ENCODE measurements at regions of chr11 and their contacts with region 1.

Region 1: GRCh38 chr11:122655527-122656072 is at the start of gene UBASH3B:
- DNase-seq: peak; percentile 49 to 65 (median 62)
- ATAC-seq: peak; percentile 82
- H3K4me3 ChIP-seq: peak within 1 kb of the TSS; percentile 68
- H3K4me3 Mint-ChIP-seq: peak within 1 kb of the TSS; percentile 91 to 99 (median 98)
- H3K27ac ChIP-seq: peak within 1 kb of the TSS; percentile 83
- H3K27ac Mint-ChIP-seq: peak within 1 kb of the TSS; percentile 73 to 97 (median 94)
- H3K4me1 ChIP-seq: peaks cover 4 to 29% of the 10 kb centered on the region in 2 donors
- H3K4me1 Mint-ChIP-seq: peaks cover 18 to 50% (median 43%) of the 10 kb centered on the region in 7 donors
- H3K27me3 ChIP-seq: no peaks in the 10 kb centered on the region
- H3K27me3 Mint-ChIP-seq: peaks cover 0 to 60% (median 0%) of the 10 kb centered on the region in 5 donors
- total RNA-seq, gene UBASH3B: 10.4 to 49.8 (median 43.2) TPM

Region 2: GRCh38 chr11:122578168-122578825 is 77.3 kb before region 1 on chr11:
- CTCF ChIA-PET with region 1: interaction called, 3 read pairs
- POLR2A ChIA-PET with region 1: no interaction called
- intact Hi-C with region 1: loop called in 1 of 2 experiments (anchors 1 kb)
- DNase-seq: no peak
- ATAC-seq: no peak
- H3K4me3 ChIP-seq: no peak overlapping the region
- H3K4me3 Mint-ChIP-seq: no peak overlapping the region
- H3K27ac ChIP-seq: no peak overlapping the region
- H3K27ac Mint-ChIP-seq: no peak overlapping the region
- H3K4me1 ChIP-seq: no peaks in the 10 kb centered on the region
- H3K4me1 Mint-ChIP-seq: peaks cover 5 to 17% (median 11%) of the 10 kb centered on the region in 7 donors
- H3K27me3 ChIP-seq: no peaks in the 10 kb centered on the region
- H3K27me3 Mint-ChIP-seq: peaks cover 0 to 7% (median 0%) of the 10 kb centered on the region in 5 donors

Region 3: GRCh38 chr11:122598971-122599370 is 56.6 kb before region 1 on chr11:
- CTCF ChIA-PET with region 1: no interaction called
- POLR2A ChIA-PET with region 1: no interaction called
- intact Hi-C with region 1: no loop called
- DNase-seq: no peak
- ATAC-seq: no peak
- H3K4me3 ChIP-seq: no peak overlapping the region
- H3K4me3 Mint-ChIP-seq: no peak overlapping the region
- H3K27ac ChIP-seq: no peak overlapping the region
- H3K27ac Mint-ChIP-seq: no peak overlapping the region
- H3K4me1 ChIP-seq: no peaks in the 10 kb centered on the region
- H3K4me1 Mint-ChIP-seq: no peaks in the 10 kb centered on the region
- H3K27me3 ChIP-seq: no peaks in the 10 kb centered on the region
- H3K27me3 Mint-ChIP-seq: peaks cover 0 to 20% (median 16%) of the 10 kb centered on the region in 5 donors

Region 4: DNA sequence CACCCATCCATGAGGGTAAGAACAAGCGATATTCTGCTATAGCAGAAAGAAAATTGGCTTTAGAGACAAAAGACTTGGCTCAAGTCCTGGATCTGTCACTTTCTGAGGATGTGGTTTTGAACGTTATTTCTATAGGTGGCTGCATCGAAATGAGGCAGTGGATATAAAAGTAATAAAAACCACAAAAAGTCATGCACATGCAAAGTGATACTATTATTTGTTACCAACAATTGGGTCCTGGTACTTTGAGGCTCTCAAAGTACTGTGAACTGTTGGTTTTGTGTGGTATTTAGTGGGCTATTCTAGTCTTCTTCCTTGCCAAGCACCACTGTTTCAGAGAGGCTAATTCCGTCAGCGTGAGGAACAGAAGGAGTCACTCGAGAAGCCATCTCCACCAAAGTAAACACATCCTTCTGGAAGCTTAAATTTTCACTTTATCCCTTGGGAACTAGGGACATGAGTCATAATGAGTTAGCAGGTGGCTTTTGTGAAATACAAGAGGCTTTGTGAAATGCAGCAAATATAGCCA is 13.0 kb after region 1 on chr11:
- CTCF ChIA-PET with region 1: interaction called, 17 read pairs
- POLR2A ChIA-PET with region 1: interaction called, 46 read pairs
- intact Hi-C with region 1: loop called in 1 of 2 experiments (anchors 1 kb)
- DNase-seq: peak in 6 of 9 donors; percentile 22 to 68 (median 52)
- ATAC-seq: peak; percentile 47
- H3K4me3 ChIP-seq: no peak overlapping the region
- H3K4me3 Mint-ChIP-seq: peak overlapping the region; percentile 9 to 77 (median 62)
- H3K27ac ChIP-seq: peak overlapping the region; percentile 55
- H3K27ac Mint-ChIP-seq: peak overlapping the region in 8 of 9 donors; percentile 79 to 99 (median 90)
- H3K4me1 ChIP-seq: peaks cover 45 to 53% of the 10 kb centered on the region in 2 donors
- H3K4me1 Mint-ChIP-seq: peaks cover 36 to 91% (median 77%) of the 10 kb centered on the region in 7 donors
- H3K27me3 ChIP-seq: no peaks in the 10 kb centered on the region
- H3K27me3 Mint-ChIP-seq: peaks cover 0 to 9% (median 0%) of the 10 kb centered on the region in 5 donors

Region 5: DNA sequence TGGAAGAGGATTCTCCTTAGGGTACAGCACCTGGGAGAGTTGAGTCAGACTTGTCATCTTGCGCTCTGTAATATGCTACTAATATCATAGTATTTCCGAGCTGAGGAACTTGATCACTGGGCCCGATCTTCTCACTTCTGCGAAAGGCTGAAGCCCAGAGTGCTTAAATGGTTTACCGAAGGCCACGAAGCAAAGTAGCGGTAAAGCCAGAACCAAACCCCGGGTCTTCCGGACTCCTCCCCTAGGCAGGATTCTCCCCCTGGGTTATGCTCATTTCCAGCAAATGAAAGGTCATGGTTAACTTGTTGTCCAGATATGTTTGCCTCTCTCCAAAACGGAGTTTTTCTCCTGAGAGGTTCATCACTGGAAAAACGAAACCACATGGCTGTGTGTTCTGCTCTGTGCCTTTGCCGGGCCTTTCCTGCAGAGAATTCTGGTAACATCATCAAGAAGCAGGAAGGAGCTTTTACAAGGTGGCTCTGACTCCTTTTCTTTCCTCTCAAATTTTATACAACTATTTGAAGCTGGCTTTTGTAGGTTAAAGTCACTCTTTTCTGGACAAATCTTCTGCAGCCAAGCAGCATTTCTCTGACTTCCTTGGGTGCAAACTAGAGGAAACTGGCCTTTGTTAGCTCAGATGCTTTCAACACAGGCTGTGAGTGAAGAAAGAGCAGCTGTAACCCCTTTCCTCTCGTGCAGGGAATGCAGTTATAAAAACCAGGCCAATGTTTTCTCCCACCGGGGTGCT is 35.4 kb after region 1 on chr11:
- CTCF ChIA-PET with region 1: interaction called, 23 read pairs
- POLR2A ChIA-PET with region 1: interaction called, 39 read pairs
- intact Hi-C with region 1: loop called in 1 of 2 experiments (anchors 1 kb)
- DNase-seq: peak in 5 of 9 donors; percentile 8 to 45 (median 33)
- ATAC-seq: peak; percentile 64
- H3K4me3 ChIP-seq: peak overlapping the region; percentile 33
- H3K4me3 Mint-ChIP-seq: peak overlapping the region; percentile 74 to 93 (median 84)
- H3K27ac ChIP-seq: peak overlapping the region; percentile 75
- H3K27ac Mint-ChIP-seq: peak overlapping the region; percentile 83 to 96 (median 93)
- H3K4me1 ChIP-seq: peaks cover 4 to 65% of the 10 kb centered on the region in 2 donors
- H3K4me1 Mint-ChIP-seq: peaks cover 42 to 87% (median 77%) of the 10 kb centered on the region in 7 donors
- H3K27me3 ChIP-seq: no peaks in the 10 kb centered on the region
- H3K27me3 Mint-ChIP-seq: no peaks in the 10 kb centered on the region

Region 6: DNA sequence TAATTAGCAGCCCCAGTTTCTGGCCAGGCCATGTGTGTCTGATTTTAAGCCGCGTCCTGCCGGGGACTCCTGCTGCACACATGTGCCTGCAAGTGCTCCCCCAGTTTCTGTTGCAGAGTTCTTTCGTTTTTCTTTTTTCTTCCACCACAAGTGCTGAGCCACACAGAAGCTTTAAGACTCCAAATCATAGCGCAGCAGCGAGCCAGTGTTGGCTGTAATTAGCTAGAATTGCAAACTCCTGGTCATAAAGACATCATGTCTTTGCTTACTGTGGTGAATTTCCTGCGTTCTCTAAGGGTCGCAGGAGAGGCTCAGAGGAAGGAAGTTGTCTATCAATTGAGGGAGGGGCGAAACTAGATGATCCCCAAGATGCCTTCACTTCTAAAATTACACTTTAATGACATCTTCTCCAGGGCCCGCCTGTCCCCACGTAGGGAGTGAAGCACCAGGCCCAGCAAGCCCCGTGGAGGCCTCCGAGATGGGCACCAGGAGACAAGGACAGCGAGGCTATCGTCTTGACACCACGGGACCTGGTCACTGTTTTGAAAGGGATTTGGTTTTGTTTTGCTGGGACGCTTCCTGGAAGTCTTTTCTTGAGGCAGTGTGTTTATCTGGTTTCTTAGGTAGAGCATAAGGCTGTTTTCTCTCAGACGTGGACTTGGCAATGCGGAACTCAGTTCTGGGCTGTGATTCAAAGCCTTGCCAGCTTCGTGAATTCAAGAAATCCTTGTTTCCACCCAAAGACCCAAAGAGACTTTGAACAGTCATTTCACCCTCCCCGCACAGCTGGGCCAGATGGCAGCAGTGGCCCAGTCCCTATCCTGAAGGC is 71.7 kb after region 1 on chr11:
- CTCF ChIA-PET with region 1: interaction called, 8 read pairs
- POLR2A ChIA-PET with region 1: interaction called, 14 read pairs
- intact Hi-C with region 1: loop called in 1 of 2 experiments (anchors 2 kb)
- DNase-seq: peak in 7 of 9 donors; percentile 33 to 56 (median 48)
- ATAC-seq: peak; percentile 77
- H3K4me3 ChIP-seq: peak overlapping the region; percentile 37
- H3K4me3 Mint-ChIP-seq: peak overlapping the region; percentile 79 to 95 (median 85)
- H3K27ac ChIP-seq: peak overlapping the region; percentile 81
- H3K27ac Mint-ChIP-seq: peak overlapping the region; percentile 88 to 100 (median 97)
- H3K4me1 ChIP-seq: peaks cover 20 to 64% of the 10 kb centered on the region in 2 donors
- H3K4me1 Mint-ChIP-seq: peaks cover 53 to 73% (median 66%) of the 10 kb centered on the region in 7 donors
- H3K27me3 ChIP-seq: no peaks in the 10 kb centered on the region
- H3K27me3 Mint-ChIP-seq: no peaks in the 10 kb centered on the region

Region 7: DNA sequence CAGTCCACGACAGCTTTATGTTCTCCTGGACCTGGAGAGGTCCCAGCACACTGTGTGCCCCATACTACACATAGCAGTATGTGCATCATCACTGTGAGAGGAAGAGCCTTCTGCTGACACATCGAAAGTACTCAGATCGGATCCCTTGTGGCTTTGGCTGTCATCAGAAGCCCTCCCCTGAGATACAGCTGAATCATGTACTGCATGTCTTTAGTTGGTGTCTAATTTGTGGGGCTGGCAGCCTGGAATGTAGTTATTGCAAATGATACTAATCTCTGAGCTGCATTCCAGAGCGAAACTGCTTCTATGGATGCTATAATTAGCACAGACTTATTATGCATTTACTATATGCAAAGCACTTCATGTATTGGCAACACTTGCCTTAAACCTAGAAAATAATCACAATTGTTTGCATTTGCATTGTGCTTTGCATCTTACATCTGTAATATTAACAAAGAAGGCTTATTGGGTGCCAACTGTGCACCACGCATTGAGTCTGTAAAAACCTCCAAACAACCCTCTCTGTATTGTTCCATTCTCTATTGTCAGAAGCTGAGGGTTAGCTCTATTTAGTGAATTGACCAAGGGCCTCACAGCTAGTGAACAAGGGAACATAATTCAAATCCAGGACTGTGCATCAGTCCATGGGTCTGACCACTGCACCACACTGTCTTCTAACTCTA is 93.5 kb after region 1 on chr11:
- CTCF ChIA-PET with region 1: interaction called, 80 read pairs
- POLR2A ChIA-PET with region 1: interaction called, 34 read pairs
- intact Hi-C with region 1: loop called (anchors 1 kb)
- DNase-seq: peak in 5 of 9 donors; percentile 17 to 51 (median 28)
- ATAC-seq: peak; percentile 81
- H3K4me3 ChIP-seq: no peak overlapping the region
- H3K4me3 Mint-ChIP-seq: peak overlapping the region in 3 of 10 donors; percentile 8 to 45 (median 18)
- H3K27ac ChIP-seq: no peak overlapping the region
- H3K27ac Mint-ChIP-seq: peak overlapping the region in 2 of 9 donors; percentile 48 to 49
- H3K4me1 ChIP-seq: peaks cover 41 to 50% of the 10 kb centered on the region in 2 donors
- H3K4me1 Mint-ChIP-seq: peaks cover 4 to 70% (median 35%) of the 10 kb centered on the region in 7 donors
- H3K27me3 ChIP-seq: no peaks in the 10 kb centered on the region
- H3K27me3 Mint-ChIP-seq: peaks cover 0 to 13% (median 0%) of the 10 kb centered on the region in 5 donors

Region 8: DNA sequence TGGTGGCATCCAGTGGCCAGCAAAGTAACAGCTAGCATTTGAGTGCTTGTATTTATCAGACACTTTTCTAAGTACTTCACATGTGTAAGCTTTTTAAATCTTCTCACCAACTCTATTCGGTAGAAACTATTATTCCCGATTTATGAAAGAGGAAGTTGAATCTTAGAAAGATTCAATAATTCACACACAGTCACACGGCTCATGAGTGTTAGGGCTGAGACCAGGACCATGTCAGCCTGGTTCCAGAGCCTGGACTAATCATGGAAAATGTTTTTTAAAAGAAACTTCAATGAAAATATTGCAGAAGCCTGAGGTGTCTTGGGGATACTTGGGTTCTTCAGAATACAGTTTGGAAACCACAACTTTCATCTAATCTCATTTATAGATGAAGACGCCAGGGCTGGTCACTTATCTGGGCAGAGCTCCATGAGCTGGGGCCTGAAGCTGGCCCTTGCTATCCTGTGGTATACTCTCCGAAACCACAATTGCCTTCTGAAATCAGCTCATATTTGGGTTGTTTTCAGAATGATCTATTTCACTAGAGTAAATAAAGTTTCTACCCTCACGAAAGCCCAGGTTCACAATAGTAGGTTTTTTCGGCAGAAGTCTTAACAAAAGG is 178.4 kb after region 1 on chr11:
- CTCF ChIA-PET with region 1: no interaction called
- POLR2A ChIA-PET with region 1: no interaction called
- intact Hi-C with region 1: no loop called
- DNase-seq: no peak
- ATAC-seq: no peak
- H3K4me3 ChIP-seq: no peak overlapping the region
- H3K4me3 Mint-ChIP-seq: no peak overlapping the region
- H3K27ac ChIP-seq: no peak overlapping the region
- H3K27ac Mint-ChIP-seq: no peak overlapping the region
- H3K4me1 ChIP-seq: peaks cover 6 to 21% of the 10 kb centered on the region in 2 donors
- H3K4me1 Mint-ChIP-seq: peaks cover 2 to 33% (median 25%) of the 10 kb centered on the region in 7 donors
- H3K27me3 ChIP-seq: no peaks in the 10 kb centered on the region
- H3K27me3 Mint-ChIP-seq: peaks cover 0 to 15% (median 0%) of the 10 kb centered on the region in 5 donors

Region 9: GRCh38 chr11:122963961-122964360 is 308.4 kb after region 1 on chr11:
- CTCF ChIA-PET with region 1: no interaction called
- POLR2A ChIA-PET with region 1: no interaction called
- intact Hi-C with region 1: no loop called
- DNase-seq: no peak
- ATAC-seq: no peak
- H3K4me3 ChIP-seq: no peak overlapping the region
- H3K4me3 Mint-ChIP-seq: no peak overlapping the region
- H3K27ac ChIP-seq: no peak overlapping the region
- H3K27ac Mint-ChIP-seq: no peak overlapping the region
- H3K4me1 ChIP-seq: no peaks in the 10 kb centered on the region
- H3K4me1 Mint-ChIP-seq: peaks cover 0 to 1% (median 0%) of the 10 kb centered on the region in 7 donors
- H3K27me3 ChIP-seq: peaks cover 0 to 3% of the 10 kb centered on the region in 2 donors
- H3K27me3 Mint-ChIP-seq: peaks cover 27 to 40% (median 35%) of the 10 kb centered on the region in 5 donors

Region 10: GRCh38 chr11:122981388-122982264 is 326.0 kb after region 1 on chr11 and contains the start of gene BSX:
- CTCF ChIA-PET with region 1: no interaction called
- POLR2A ChIA-PET with region 1: no interaction called
- intact Hi-C with region 1: no loop called
- DNase-seq: peak in 8 of 9 donors; percentile 30 to 71 (median 36)
- ATAC-seq: peak; percentile 72
- H3K4me3 ChIP-seq: no peak within 1 kb of the TSS
- H3K4me3 Mint-ChIP-seq: peak within 1 kb of the TSS in 6 of 10 donors; percentile 2 to 48 (median 20)
- H3K27ac ChIP-seq: no peak within 1 kb of the TSS
- H3K27ac Mint-ChIP-seq: peak within 1 kb of the TSS in 1 of 9 donors; percentile 15
- H3K4me1 ChIP-seq: peaks cover 0 to 16% of the 10 kb centered on the region in 2 donors
- H3K4me1 Mint-ChIP-seq: peaks cover 23 to 53% (median 35%) of the 10 kb centered on the region in 7 donors
- H3K27me3 ChIP-seq: peaks cover 32 to 54% of the 10 kb centered on the region in 2 donors
- H3K27me3 Mint-ChIP-seq: peaks cover 84 to 94% (median 92%) of the 10 kb centered on the region in 5 donors
- total RNA-seq, gene BSX: not detected

Region 11: GRCh38 chr11:123741159-123742028 is 1085.8 kb after region 1 on chr11 and contains the start of gene ZNF202:
- CTCF ChIA-PET with region 1: no interaction called
- POLR2A ChIA-PET with region 1: no interaction called
- intact Hi-C with region 1: loop called in 1 of 2 experiments (anchors 5 kb)
- DNase-seq: peak; percentile 83 to 92 (median 89)
- ATAC-seq: peak; percentile 98
- H3K4me3 ChIP-seq: peak within 1 kb of the TSS; percentile 92
- H3K4me3 Mint-ChIP-seq: peak within 1 kb of the TSS; percentile 85 to 100 (median 96)
- H3K27ac ChIP-seq: peak within 1 kb of the TSS; percentile 85
- H3K27ac Mint-ChIP-seq: peak within 1 kb of the TSS; percentile 91 to 98 (median 95)
- H3K4me1 ChIP-seq: peaks cover 19% of the 10 kb centered on the region in 2 donors
- H3K4me1 Mint-ChIP-seq: peaks cover 30 to 57% (median 46%) of the 10 kb centered on the region in 7 donors
- H3K27me3 ChIP-seq: no peaks in the 10 kb centered on the region
- H3K27me3 Mint-ChIP-seq: peaks cover 0 to 24% (median 6%) of the 10 kb centered on the region in 5 donors
- total RNA-seq, gene ZNF202: 13.0 to 27.0 (median 18.6) TPM

Measured in naive thymus-derived CD4-positive, alpha-beta T cell (primary cell).